Breast epithelium (tissue), 4 donors: ENCODE measurements at regions of chr11 and their contacts with region 1.

Region 1: DNA sequence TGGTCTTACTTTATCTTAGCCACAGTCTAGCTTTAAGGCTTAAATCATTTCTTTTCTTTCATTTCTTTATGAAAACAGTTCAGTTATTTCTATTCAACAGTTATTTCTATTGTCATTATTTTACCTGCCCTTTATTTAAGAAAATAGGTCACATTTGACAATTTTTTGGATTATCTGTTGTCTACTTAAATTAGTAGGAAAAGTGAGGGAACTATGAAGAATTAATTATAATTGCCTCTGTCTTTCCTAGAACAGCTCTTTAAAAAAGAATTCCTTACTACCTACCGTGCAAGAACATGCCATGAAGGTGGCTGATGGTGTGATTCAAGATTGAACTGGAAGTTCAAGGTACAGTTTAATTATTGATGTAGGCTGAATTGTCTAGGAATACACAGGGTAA is at the start of gene OR4C6:
- DNase-seq: no peak
- H3K4me3 ChIP-seq: no peak within 1 kb of the TSS
- H3K27ac ChIP-seq: no peak within 1 kb of the TSS
- H3K4me1 ChIP-seq: no peaks in the 10 kb centered on the region
- H3K27me3 ChIP-seq: no peaks in the 10 kb centered on the region
- CTCF ChIP-seq: no peak
- POLR2A ChIP-seq: no peak
- total RNA-seq, gene OR4C6: not detected

Region 2: GRCh38 chr11:57399221-57399620 is 1737.3 kb after region 1 on chr11:
- intact Hi-C with region 1: loop called (anchors 10 kb)
- DNase-seq: no peak
- H3K4me3 ChIP-seq: no peak overlapping the region
- H3K27ac ChIP-seq: no peak overlapping the region
- H3K4me1 ChIP-seq: no peaks in the 10 kb centered on the region
- H3K27me3 ChIP-seq: no peaks in the 10 kb centered on the region
- CTCF ChIP-seq: no peak
- POLR2A ChIP-seq: no peak